Naive thymus-derived CD8-positive, alpha-beta T cell (primary cell): ENCODE measurements at regions of chr6 and their contacts with region 1.

Region 1: DNA sequence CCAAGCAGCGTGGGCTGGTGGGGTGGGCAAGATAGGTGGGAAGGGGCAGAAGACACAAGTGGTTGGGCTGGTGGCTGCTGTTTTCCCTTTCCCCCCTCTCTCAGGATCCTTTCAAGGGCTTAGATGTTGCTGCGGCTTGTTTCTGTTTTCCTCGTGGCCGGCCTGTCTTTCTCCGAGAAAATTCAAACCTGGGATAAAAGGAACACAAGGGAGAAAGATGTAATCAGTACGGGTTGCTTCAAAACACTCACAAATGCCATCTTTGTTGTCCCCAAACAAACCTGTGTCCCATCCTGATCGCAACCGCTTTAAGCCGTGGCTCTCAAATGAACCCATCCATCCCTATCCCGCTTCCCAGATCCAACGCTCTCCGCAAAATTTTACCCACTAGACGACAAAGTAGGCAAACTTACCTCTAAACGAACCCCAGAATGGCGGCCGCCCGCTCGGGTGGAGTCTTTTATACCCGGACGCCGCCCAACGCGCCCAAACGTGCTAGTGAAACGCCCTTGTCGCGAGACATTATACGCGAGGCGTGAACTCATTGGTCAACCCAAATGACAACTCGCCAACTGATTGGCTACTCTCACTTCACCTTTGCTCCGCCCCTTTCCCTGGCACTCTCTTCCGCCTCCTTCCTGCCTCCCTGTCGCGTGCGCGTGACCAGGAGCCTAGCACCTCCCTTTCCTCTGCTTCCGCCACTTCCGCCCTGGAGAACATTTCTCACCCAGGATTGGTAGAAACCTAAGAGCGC is at the start of gene PPP1R10:
- DNase-seq: peak; percentile 83 to 100 (median 99)
- ATAC-seq: peak; percentile 70 to 77
- H3K4me3 Mint-ChIP-seq: peak within 1 kb of the TSS; percentile 92 to 100 (median 99)
- H3K27ac Mint-ChIP-seq: peak within 1 kb of the TSS; percentile 99 to 100 (median 100)
- H3K4me1 Mint-ChIP-seq: peaks cover 18 to 61% (median 48%) of the 10 kb centered on the region in 4 donors
- H3K27me3 Mint-ChIP-seq: peaks cover 0 to 8% (median 0%) of the 10 kb centered on the region in 5 donors
- polyA plus RNA-seq, gene PPP1R10: 16.9 to 20.2 (median 19.8) TPM

Region 2: GRCh38 chr6:30489081-30490025 is 127.6 kb before region 1 on chr6 and contains the start of gene HLA-E:
- POLR2A ChIA-PET with region 1: interaction called, 12 read pairs
- DNase-seq: peak; percentile 59 to 97 (median 92)
- ATAC-seq: peak; percentile 79 to 82
- H3K4me3 Mint-ChIP-seq: peak within 1 kb of the TSS; percentile 95 to 100 (median 99)
- H3K27ac Mint-ChIP-seq: peak within 1 kb of the TSS; percentile 97 to 100 (median 98)
- H3K4me1 Mint-ChIP-seq: peaks cover 34 to 61% (median 49%) of the 10 kb centered on the region in 4 donors
- H3K27me3 Mint-ChIP-seq: no peaks in the 10 kb centered on the region
- polyA plus RNA-seq, gene HLA-E: 2,699 to 2,977 (median 2,826) TPM

Region 3: GRCh38 chr6:30556066-30556905 is 60.7 kb before region 1 on chr6 and contains the start of gene GNL1:
- POLR2A ChIA-PET with region 1: interaction called, 78 read pairs
- DNase-seq: peak; percentile 97 to 100 (median 99)
- ATAC-seq: peak; percentile 86 to 87
- H3K4me3 Mint-ChIP-seq: peak within 1 kb of the TSS; percentile 87 to 100 (median 99)
- H3K27ac Mint-ChIP-seq: peak within 1 kb of the TSS; percentile 98 to 100 (median 100)
- H3K4me1 Mint-ChIP-seq: peaks cover 25 to 70% (median 56%) of the 10 kb centered on the region in 4 donors
- H3K27me3 Mint-ChIP-seq: peaks cover 0 to 2% (median 0%) of the 10 kb centered on the region in 5 donors
- polyA plus RNA-seq, gene GNL1: 24.7 to 34.1 (median 28.7) TPM

Region 4: DNA sequence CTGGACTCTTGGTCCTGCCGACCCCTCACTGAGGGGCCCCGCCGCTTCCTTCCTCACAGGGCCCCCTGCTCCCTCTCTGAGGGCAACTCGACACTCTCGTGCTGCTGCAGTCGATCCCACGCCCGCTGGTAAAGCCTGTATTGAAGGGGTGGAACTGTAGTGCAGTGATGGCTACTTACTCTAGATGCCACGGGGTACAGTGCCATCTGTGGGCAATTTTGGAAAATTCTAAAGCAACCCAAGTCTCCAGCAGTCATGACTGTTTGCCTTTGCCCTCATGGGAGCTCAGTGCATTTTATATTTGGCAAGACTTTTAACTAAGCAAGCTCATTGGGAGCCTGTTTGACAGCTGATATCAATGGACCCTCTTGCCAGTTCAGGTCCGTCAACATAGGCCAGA is 23.5 kb after region 1 on chr6:
- POLR2A ChIA-PET with region 1: interaction called, 15 read pairs
- DNase-seq: peak in 2 of 10 donors; percentile 26 to 34
- ATAC-seq: peak; percentile 68 to 80
- H3K4me3 Mint-ChIP-seq: peak overlapping the region in 1 of 10 donors; percentile 54
- H3K27ac Mint-ChIP-seq: peak overlapping the region in 9 of 10 donors; percentile 83 to 96 (median 92)
- H3K4me1 Mint-ChIP-seq: peaks cover 22 to 35% (median 29%) of the 10 kb centered on the region in 4 donors
- H3K27me3 Mint-ChIP-seq: no peaks in the 10 kb centered on the region

Region 5: DNA sequence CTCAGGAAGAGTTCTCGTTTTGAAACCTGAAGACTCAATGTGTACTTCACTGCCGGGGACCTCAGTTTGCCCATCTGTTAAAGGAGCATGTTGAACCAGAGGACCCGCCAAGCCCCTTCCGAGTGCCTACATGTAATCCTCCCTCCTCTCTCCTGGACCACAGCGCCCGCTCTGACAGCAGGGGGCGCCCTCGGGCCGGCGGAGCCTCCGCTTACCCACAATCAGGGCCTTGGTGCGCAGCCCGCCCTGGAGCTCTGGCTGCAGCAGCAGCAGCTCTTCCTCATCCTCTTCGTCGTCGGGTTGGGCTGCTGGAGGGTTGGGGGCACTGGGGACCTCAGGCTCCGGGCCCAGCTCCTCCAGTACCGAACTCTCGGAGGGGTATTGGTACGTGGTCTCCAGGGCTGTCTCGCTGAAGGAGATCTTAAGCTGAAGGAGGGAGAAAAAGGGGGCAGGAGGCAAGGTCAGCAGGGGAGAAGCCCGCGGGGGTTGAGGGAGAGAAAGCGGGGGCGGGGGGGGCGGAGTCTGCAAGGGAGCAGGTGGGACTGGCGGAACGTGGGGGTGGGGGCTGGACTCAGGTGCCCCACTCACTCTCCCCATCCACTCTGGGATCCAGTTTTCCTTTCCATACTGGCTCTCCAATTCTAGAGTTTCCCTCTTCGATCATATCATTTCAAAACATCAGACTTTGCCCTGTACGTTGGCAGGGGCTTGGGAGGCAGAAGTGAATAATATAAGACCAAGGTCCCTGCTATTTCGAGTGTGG is 62.2 kb after region 1 on chr6:
- POLR2A ChIA-PET with region 1: interaction called, 37 read pairs
- DNase-seq: peak; percentile 84 to 98 (median 92)
- ATAC-seq: peak; percentile 51 to 54
- H3K4me3 Mint-ChIP-seq: peak overlapping the region; percentile 94 to 100 (median 99)
- H3K27ac Mint-ChIP-seq: peak overlapping the region; percentile 77 to 99 (median 98)
- H3K4me1 Mint-ChIP-seq: peaks cover 21 to 60% (median 47%) of the 10 kb centered on the region in 4 donors
- H3K27me3 Mint-ChIP-seq: no peaks in the 10 kb centered on the region